K562 (cell line): ENCODE measurements at regions of chr2 and their contacts with region 1.

Region 1: GRCh38 chr2:202588647-202589581 is 45.9 kb upstream of the FAM117B start:
- DNase-seq: peak; percentile 65 to 75 (median 68)
- ATAC-seq: peak; percentile 97
- H3K4me3 ChIP-seq: no peak overlapping the region
- H3K27ac ChIP-seq: no peak overlapping the region
- H3K4me1 ChIP-seq: peaks cover 3 to 4% of the 10 kb centered on the region in 2 experiments; a peak in 3 of 5 replicates
- H3K27me3 ChIP-seq: no peaks in the 10 kb centered on the region
- CTCF ChIP-seq: peak; percentile 74 to 84 (median 79)
- EP300 ChIP-seq: no peak
- POLR2A ChIP-seq: no peak
- RAD21 ChIP-seq: peak; percentile 70 to 83

Region 2: DNA sequence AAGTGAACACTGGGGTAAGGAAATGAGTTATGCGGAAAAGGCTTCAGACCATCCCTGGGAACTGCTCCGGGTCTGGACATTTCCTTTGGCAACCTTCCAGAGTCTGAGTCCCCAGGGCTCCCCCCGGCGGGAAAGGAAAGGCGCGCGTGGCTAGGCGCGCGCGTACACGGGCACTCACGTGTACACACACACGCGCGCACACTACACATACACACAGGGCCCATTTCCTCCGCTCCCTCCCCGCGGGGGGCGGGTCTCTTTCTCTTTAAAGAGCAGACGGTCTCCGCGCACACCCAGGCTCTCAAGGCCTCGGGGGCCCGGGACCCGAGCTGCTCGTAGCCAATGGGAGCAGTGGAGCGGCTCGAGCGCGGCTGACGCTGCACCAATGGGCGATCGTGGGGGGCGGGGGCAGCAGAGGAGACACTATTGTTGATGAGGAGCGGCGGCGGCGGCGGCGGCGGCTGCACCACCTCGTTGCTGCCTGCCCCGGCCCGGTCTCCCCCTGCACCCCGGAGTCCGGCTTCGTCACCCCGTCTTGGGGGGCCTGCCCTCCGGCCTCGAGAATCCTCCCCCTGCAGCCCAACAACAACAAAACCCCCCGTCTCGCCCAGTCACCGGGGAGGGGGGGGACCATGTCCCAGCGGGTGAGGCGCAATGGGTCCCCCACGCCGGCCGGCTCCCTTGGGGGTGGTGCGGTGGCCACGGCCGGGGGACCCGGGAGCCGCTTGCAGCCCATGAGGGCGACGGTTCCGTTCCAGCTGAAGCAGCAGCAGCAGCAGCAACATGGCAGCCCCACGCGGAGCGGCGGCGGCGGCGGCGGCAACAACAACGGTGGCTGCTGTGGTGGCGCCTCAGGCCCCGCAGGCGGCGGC is 45.9 kb after region 1 on chr2 and contains the start of gene FAM117B:
- CTCF ChIA-PET with region 1: no interaction called
- POLR2A ChIA-PET with region 1: no interaction called
- in situ Hi-C with region 1: no loop called
- intact Hi-C with region 1: loop called (anchors 5 kb)
- DNase-seq: peak; percentile 90 to 95 (median 92)
- ATAC-seq: peak; percentile 96
- H3K4me3 ChIP-seq: peak within 1 kb of the TSS; percentile 95
- H3K27ac ChIP-seq: peak within 1 kb of the TSS; percentile 77
- H3K4me1 ChIP-seq: peaks cover 8 to 10% of the 10 kb centered on the region in 2 experiments; a peak in 4 of 5 replicates
- H3K27me3 ChIP-seq: no peaks in the 10 kb centered on the region
- CTCF ChIP-seq: no peak
- EP300 ChIP-seq: no peak
- POLR2A ChIP-seq: peak; percentile 82
- RAD21 ChIP-seq: no peak
- polyA plus RNA-seq, gene FAM117B: 2.6 to 3.7 TPM

Region 3: DNA sequence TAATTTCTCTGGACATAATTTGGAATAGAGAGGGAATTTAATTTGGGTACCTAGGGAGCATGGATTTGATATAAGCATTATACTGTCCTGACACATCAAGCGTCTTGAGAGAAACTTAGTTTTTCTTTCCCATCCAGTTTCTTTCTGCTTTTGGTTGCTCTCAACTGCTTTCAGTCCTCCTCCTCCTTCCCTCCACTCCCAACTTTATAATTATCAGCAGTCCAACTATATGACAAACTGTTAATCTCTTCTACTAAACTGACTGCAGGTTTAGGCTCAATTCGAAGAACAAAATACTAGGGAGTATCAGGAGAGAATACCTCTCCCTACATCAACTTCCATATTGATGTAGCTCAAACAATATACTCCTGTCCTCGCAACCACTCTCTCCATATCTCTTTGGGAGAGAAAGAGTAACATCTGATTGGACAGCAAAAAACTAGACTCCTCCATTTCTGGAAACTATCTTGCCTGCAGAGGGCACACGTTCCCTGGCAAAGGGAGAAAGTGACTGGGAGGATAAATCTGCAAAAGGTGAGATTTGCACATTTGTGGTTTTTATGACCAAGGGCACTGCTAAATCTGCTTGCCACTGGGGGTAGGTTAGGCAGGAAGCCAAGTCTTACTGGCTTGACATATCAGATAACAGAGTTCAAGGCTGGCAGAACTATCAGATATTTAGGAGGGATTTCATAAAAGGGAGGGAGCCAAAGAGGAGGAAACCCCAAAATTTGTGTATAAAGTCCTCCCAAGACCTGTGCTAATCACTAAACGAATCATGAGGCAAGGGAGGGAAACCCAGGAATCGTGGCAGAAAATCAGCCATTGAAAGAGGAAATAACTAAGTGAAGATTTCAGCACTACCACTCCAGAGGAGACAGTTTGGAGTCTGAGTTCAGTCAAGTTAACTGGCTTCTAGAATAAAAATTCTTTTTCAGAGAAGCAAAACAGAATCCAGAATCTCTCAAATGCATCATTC is 242.6 kb after region 1 on chr2:
- CTCF ChIA-PET with region 1: no interaction called
- POLR2A ChIA-PET with region 1: no interaction called
- in situ Hi-C with region 1: no loop called
- intact Hi-C with region 1: loop called (anchors 5 kb)
- DNase-seq: peak; percentile 21 to 62 (median 41)
- ATAC-seq: peak; percentile 90
- H3K4me3 ChIP-seq: no peak overlapping the region
- H3K27ac ChIP-seq: no peak overlapping the region
- H3K4me1 ChIP-seq: no peaks in the 10 kb centered on the region
- H3K27me3 ChIP-seq: no peaks in the 10 kb centered on the region
- CTCF ChIP-seq: peak; percentile 56 to 76 (median 59); a peak in 5 of 6 replicates
- EP300 ChIP-seq: no peak
- POLR2A ChIP-seq: no peak
- RAD21 ChIP-seq: peak; percentile 31 to 87

Region 4: GRCh38 chr2:202870431-202871299 is 281.8 kb after region 1 on chr2:
- CTCF ChIA-PET with region 1: no interaction called
- POLR2A ChIA-PET with region 1: no interaction called
- in situ Hi-C with region 1: no loop called
- intact Hi-C with region 1: loop called (anchors 5 kb)
- DNase-seq: peak; percentile 41 to 67 (median 48)
- ATAC-seq: peak; percentile 91
- H3K4me3 ChIP-seq: peak overlapping the region; percentile 73
- H3K27ac ChIP-seq: peak overlapping the region; percentile 66; the same call in 1 of the 3 replicates
- H3K4me1 ChIP-seq: peaks cover 0 to 21% of the 10 kb centered on the region in 2 experiments; a peak in 2 of 5 replicates
- H3K27me3 ChIP-seq: no peaks in the 10 kb centered on the region
- CTCF ChIP-seq: peak; percentile 37 to 68 (median 55); a peak in 5 of 6 replicates
- EP300 ChIP-seq: no peak
- POLR2A ChIP-seq: no peak
- RAD21 ChIP-seq: peak; percentile 34 to 40; a peak in 2 of 4 replicates

Region 5: DNA sequence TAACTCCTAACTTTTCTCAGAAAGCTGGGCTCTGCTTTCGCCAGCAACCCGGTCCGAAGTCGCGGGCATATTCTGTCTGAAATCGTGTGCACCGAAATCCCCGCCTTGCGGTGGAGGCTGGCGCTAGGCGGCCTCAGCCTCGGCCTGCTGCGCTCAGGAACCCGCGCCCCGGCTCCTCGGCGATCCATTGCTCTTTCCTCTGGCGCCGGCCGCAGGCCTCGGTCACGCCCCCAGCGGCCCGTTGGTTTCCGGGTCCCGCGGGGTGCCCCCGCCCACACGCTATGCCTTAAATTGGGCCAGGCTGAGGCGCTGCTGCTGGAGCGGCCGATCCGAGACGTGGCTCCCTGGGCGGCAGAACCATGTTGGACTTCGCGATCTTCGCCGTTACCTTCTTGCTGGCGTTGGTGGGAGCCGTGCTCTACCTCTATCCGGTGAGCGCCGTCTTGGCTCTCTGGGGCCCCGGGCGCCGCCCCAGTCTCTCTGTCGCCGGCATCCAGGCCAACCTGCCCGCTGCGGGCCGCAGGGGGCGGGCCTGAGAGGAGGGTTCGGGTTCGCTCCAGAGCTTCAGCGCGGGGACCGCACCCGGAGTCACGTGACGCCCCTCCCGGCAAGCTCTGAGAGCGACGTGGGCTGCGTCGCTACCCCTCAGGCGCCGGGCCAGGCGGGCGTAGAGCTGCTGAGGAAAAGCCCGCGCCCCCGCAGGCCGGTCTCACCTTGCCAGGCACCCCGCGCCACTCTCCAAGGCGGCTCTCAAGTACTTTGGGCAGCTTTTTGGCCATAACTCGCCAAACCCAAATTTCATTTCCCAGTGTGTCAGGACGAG is 650.0 kb after region 1 on chr2 and contains the start of gene CYP20A1:
- CTCF ChIA-PET with region 1: no interaction called
- POLR2A ChIA-PET with region 1: no interaction called
- in situ Hi-C with region 1: no loop called
- intact Hi-C with region 1: loop called (anchors 10 kb)
- DNase-seq: peak; percentile 85 to 94 (median 87)
- ATAC-seq: peak; percentile 92
- H3K4me3 ChIP-seq: peak within 1 kb of the TSS; percentile 63
- H3K27ac ChIP-seq: peak within 1 kb of the TSS; percentile 91
- H3K4me1 ChIP-seq: peaks cover 5 to 7% of the 10 kb centered on the region in 2 experiments; a peak in 3 of 5 replicates
- H3K27me3 ChIP-seq: no peaks in the 10 kb centered on the region
- CTCF ChIP-seq: peak; percentile 27 to 34 (median 32); a peak in 3 of 6 replicates
- EP300 ChIP-seq: no peak
- POLR2A ChIP-seq: peak; percentile 97
- RAD21 ChIP-seq: no peak; a peak in 1 of 4 replicates
- polyA plus RNA-seq, gene CYP20A1: 27.8 to 31.7 TPM

Region 6: DNA sequence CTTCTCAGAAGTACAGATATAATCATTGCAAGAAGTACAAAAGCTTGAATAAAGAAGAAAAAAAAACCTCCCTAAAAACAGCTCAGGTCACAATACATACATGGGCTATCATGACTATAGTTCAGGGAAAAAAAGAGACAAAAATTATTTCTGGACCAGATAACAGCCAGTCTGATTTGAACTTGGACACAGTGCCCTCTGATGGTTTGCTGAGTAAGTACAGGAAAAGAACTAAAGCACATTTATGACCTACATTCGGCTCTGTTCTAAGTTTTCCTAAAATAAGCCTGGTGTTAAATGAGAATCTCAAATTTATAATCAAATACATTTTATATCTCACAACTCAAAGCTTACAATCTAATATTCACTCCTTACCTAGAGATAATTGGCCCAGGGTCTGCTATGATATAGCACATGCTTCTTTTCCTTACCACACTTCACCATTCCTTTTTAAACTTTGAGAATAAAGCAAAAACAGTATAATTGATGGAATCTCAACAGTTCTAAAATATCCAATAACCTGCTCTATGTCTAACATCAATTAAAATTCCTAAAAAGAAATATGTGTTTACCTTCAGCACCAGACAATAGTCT is 865.0 kb after region 1 on chr2:
- CTCF ChIA-PET with region 1: no interaction called
- POLR2A ChIA-PET with region 1: no interaction called
- in situ Hi-C with region 1: loop called (anchors 25 kb)
- intact Hi-C with region 1: loop called (anchors 5 kb)
- DNase-seq: peak; percentile 28 to 58 (median 37)
- ATAC-seq: peak; percentile 79
- H3K4me3 ChIP-seq: no peak overlapping the region
- H3K27ac ChIP-seq: no peak overlapping the region
- H3K4me1 ChIP-seq: no peaks in the 10 kb centered on the region
- H3K27me3 ChIP-seq: no peaks in the 10 kb centered on the region
- CTCF ChIP-seq: peak; percentile 43 to 73 (median 53); a peak in 4 of 6 replicates
- EP300 ChIP-seq: no peak
- POLR2A ChIP-seq: no peak
- RAD21 ChIP-seq: peak; percentile 66 to 79

Region 7: DNA sequence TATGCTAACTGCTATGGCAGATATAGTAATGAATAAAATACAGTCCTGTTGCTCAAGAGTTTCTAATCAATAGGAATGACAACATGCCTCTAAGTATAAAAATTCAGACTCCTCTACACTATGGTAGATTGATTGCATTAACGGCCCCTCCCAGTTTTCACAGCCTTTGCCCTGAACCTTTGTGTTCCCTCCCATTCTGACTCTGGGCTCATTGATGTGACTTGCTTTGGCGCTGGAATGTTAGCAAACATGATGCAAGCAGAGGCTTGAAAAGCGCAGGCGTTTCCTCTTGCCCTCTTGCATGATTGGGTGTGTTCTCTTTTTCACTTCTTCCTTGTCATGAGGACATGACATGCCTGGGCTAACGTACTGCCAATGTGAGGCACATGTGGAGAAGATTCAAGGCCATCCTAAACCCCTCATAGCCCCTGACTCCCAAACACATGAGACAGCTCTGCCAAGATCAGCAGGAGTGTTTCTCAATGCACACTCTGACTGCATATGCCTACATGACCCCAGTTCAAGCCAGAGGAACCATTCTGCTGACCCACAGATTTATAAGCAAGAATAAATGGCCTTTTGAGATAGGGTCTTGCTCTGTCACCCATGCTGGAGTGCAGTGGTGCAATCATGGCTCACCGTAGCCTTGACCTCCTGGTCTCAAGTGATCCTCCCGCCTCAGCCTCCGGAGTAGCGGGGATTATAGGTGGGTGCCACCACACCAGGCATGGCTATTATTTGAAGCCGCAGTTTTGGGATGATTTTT is 1067.8 kb after region 1 on chr2:
- CTCF ChIA-PET with region 1: no interaction called
- POLR2A ChIA-PET with region 1: no interaction called
- in situ Hi-C with region 1: no loop called
- intact Hi-C with region 1: no loop called
- DNase-seq: no peak
- ATAC-seq: no peak
- H3K4me3 ChIP-seq: no peak overlapping the region
- H3K27ac ChIP-seq: no peak overlapping the region
- H3K4me1 ChIP-seq: no peaks in the 10 kb centered on the region
- H3K27me3 ChIP-seq: peaks cover 0 to 19% of the 10 kb centered on the region in 2 experiments; a peak in 3 of 5 replicates
- CTCF ChIP-seq: no peak
- EP300 ChIP-seq: no peak
- POLR2A ChIP-seq: no peak
- RAD21 ChIP-seq: no peak

Region 8: DNA sequence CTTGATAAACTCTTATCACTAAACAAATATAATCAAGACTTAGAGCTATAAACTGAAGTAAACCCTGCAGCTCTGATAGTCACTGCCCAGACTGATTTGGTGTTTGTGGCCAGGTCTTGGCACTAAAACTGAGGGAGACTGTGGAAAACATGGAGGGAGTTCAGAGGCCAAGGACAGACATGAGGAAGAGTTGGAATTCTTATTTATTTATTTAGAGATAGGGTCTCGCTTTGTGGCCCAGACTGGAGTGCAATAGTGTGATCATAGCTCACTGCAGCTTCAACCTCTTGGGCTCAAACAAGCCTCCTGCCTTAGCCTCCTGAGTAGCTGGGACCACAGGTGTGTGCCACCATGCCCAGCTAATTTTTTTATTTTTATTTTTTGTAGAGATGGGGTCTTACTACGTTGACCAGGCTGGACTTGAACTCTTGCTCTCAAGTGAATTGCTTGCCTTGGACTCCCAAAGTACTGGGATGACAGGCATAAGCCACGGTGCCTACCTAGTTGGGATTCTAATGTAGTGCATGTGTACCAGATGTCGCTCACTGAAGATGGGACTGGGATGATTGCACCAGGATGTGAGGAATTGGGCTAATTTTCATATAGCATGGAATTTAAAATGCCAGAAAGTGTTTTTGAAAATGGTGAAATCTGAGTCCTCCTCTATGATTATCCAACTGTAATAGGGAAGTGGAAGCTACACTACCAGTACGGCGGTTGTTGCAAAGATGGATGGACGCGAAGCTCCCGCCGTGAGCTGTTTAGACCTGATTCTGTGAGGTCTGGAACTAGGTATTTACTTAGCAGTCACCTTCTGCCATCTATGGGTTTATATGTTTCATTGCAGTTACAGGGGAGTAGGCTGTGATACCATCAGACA is 1226.0 kb after region 1 on chr2:
- CTCF ChIA-PET with region 1: no interaction called
- POLR2A ChIA-PET with region 1: no interaction called
- in situ Hi-C with region 1: no loop called
- intact Hi-C with region 1: loop called (anchors 5 kb)
- DNase-seq: peak; percentile 35 to 48 (median 36)
- ATAC-seq: peak; percentile 83
- H3K4me3 ChIP-seq: no peak overlapping the region
- H3K27ac ChIP-seq: no peak overlapping the region
- H3K4me1 ChIP-seq: no peaks in the 10 kb centered on the region
- H3K27me3 ChIP-seq: peaks cover 0 to 4% of the 10 kb centered on the region in 2 experiments; a peak in 2 of 5 replicates
- CTCF ChIP-seq: peak; percentile 24 to 64 (median 57); a peak in 5 of 6 replicates
- EP300 ChIP-seq: no peak
- POLR2A ChIP-seq: no peak
- RAD21 ChIP-seq: peak; percentile 62 to 72